Naive thymus-derived CD4-positive, alpha-beta T cell (primary cell): ENCODE measurements at regions of chr12 and their contacts with region 1.

Region 1: GRCh38 chr12:56117778-56118687 is at the start of gene ZC3H10:
- DNase-seq: peak; percentile 80 to 99 (median 96)
- ATAC-seq: peak; percentile 89
- H3K4me3 ChIP-seq: peak within 1 kb of the TSS; percentile 95
- H3K4me3 Mint-ChIP-seq: peak within 1 kb of the TSS; percentile 87 to 100 (median 96)
- H3K27ac ChIP-seq: peak within 1 kb of the TSS; percentile 93
- H3K27ac Mint-ChIP-seq: peak within 1 kb of the TSS; percentile 95 to 99 (median 98)
- H3K4me1 ChIP-seq: peaks cover 24 to 25% of the 10 kb centered on the region in 2 donors
- H3K4me1 Mint-ChIP-seq: peaks cover 24 to 47% (median 34%) of the 10 kb centered on the region in 7 donors
- H3K27me3 ChIP-seq: no peaks in the 10 kb centered on the region
- H3K27me3 Mint-ChIP-seq: no peaks in the 10 kb centered on the region
- total RNA-seq, gene ZC3H10: 7.8 to 16.3 (median 13.3) TPM

Region 2: GRCh38 chr12:55738123-55739024 is 379.7 kb before region 1 on chr12:
- CTCF ChIA-PET with region 1: interaction called, 6 read pairs
- POLR2A ChIA-PET with region 1: interaction called, 5 read pairs
- intact Hi-C with region 1: loop called (anchors 1 to 2 kb)
- DNase-seq: peak in 8 of 9 donors; percentile 69 to 88 (median 81)
- ATAC-seq: peak; percentile 79
- H3K4me3 ChIP-seq: peak overlapping the region; percentile 91
- H3K4me3 Mint-ChIP-seq: peak overlapping the region; percentile 74 to 94 (median 89)
- H3K27ac ChIP-seq: peak overlapping the region; percentile 76
- H3K27ac Mint-ChIP-seq: peak overlapping the region; percentile 86 to 96 (median 92)
- H3K4me1 ChIP-seq: peaks cover 15 to 18% of the 10 kb centered on the region in 2 donors
- H3K4me1 Mint-ChIP-seq: peaks cover 26 to 43% (median 29%) of the 10 kb centered on the region in 7 donors
- H3K27me3 ChIP-seq: no peaks in the 10 kb centered on the region
- H3K27me3 Mint-ChIP-seq: peaks cover 0 to 8% (median 0%) of the 10 kb centered on the region in 5 donors

Region 3: DNA sequence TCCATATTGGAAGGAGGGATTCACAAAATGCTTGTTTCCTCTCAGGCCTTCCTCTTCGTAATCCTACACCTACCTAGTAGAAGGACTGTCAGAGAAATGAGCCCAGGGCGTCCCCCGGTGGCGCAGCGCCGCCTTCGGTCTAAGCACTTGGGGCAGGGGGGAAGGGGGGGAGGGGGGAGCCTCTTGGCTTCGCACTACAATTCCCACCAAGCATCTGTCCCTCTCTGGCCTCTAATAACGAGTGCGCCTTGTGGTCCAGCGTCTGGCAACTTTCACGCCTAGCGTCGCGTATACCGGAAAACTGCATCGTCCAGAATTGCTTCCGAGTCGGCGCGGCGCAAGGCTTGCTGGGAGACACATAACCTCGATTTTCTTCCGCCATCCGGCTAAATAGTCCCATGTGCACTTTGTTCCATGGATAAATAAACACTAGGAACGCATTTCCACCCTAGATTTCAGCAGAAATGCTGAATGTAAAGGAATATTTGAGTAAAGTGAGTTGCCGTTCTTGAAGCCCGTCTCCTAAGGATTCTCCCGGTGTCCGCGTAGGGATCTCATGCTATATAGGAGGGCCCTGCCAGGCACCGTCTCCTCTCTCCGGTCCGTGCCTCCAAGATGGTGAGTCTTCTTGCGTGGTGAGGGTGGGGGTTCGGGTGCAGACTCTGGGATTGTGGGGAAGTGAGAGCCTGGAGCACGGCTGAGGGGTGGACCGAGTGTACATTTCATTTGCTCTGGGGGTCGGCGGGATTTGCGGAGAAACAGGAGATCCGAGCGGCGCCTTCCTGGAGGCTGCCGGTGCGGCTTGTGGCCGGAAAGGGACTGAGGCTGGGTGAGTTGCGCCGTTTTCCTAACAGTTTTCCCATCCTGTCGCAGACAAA is 76.2 kb before region 1 on chr12 and contains the start of gene RPS26:
- CTCF ChIA-PET with region 1: interaction called, 14 read pairs
- POLR2A ChIA-PET with region 1: interaction called, 62 read pairs
- intact Hi-C with region 1: loop called (anchors 1 kb)
- DNase-seq: peak; percentile 75 to 97 (median 94)
- ATAC-seq: peak; percentile 94
- H3K4me3 ChIP-seq: peak within 1 kb of the TSS; percentile 100
- H3K4me3 Mint-ChIP-seq: peak within 1 kb of the TSS; percentile 91 to 100 (median 98)
- H3K27ac ChIP-seq: peak within 1 kb of the TSS; percentile 84
- H3K27ac Mint-ChIP-seq: peak within 1 kb of the TSS; percentile 94 to 99 (median 97)
- H3K4me1 ChIP-seq: peaks cover 16 to 19% of the 10 kb centered on the region in 2 donors
- H3K4me1 Mint-ChIP-seq: peaks cover 14 to 56% (median 34%) of the 10 kb centered on the region in 7 donors
- H3K27me3 ChIP-seq: no peaks in the 10 kb centered on the region
- H3K27me3 Mint-ChIP-seq: no peaks in the 10 kb centered on the region
- total RNA-seq, gene RPS26: 40.8 to 64.5 (median 46.4) TPM

Region 4: GRCh38 chr12:56158029-56158925 is 40.2 kb after region 1 on chr12 and contains the start of gene MYL6:
- CTCF ChIA-PET with region 1: interaction called, 15 read pairs
- POLR2A ChIA-PET with region 1: interaction called, 161 read pairs
- intact Hi-C with region 1: loop called (anchors 1 to 2 kb)
- DNase-seq: peak; percentile 58 to 97 (median 89)
- ATAC-seq: peak; percentile 91
- H3K4me3 ChIP-seq: peak within 1 kb of the TSS; percentile 89
- H3K4me3 Mint-ChIP-seq: peak within 1 kb of the TSS; percentile 94 to 99 (median 96)
- H3K27ac ChIP-seq: peak within 1 kb of the TSS; percentile 98
- H3K27ac Mint-ChIP-seq: peak within 1 kb of the TSS; percentile 88 to 99 (median 97)
- H3K4me1 ChIP-seq: peaks cover 24 to 26% of the 10 kb centered on the region in 2 donors
- H3K4me1 Mint-ChIP-seq: peaks cover 31 to 59% (median 54%) of the 10 kb centered on the region in 7 donors
- H3K27me3 ChIP-seq: no peaks in the 10 kb centered on the region
- H3K27me3 Mint-ChIP-seq: no peaks in the 10 kb centered on the region
- total RNA-seq, gene MYL6: 428 to 1,509 (median 467) TPM

Region 5: DNA sequence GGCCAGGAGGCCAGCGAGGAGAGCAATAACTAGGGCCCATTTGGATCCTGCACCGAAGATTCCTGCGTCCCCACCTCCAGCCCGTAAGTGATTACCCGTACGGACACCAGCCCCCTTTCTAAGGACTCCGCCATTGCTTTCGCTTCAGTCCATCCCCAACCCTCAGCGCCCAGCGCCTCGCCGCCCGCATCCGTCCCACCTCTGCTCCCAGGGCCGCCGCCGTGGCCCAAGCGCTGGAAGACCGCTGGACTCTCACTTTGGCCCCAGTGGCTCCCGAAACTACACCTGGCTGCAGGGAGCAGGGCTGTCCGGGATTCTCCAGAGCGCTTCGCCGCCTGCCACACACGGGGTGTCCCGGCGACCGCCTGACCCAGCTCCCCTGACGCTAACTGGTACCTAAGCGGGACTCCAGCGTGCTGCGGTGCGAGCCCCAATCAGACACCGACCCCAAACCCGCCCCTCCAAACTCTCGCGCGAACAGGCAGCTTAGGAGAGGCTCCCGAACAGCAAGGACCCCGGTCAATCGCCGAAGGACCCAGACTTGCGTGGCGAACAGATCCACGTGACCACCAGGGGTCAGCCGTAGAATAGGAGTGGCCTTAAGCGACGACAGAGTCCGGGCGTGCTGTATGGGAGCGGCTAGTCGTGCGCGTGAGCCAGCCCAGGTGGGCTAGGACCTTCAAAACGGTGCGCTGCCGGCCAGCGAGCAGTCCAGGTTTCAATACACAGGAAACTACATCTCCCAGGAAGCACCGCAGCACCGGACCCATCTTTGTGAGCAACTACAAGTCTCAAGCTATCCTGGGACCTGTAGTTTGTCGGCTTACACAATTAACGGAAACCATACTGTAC is 197.8 kb after region 1 on chr12 and contains the start of gene CNPY2:
- CTCF ChIA-PET with region 1: interaction called, 3 read pairs
- POLR2A ChIA-PET with region 1: interaction called, 6 read pairs
- intact Hi-C with region 1: loop called (anchors 1 kb)
- DNase-seq: peak; percentile 83 to 94 (median 92)
- ATAC-seq: peak; percentile 93
- H3K4me3 ChIP-seq: peak within 1 kb of the TSS; percentile 100
- H3K4me3 Mint-ChIP-seq: peak within 1 kb of the TSS; percentile 96 to 99 (median 98)
- H3K27ac ChIP-seq: peak within 1 kb of the TSS; percentile 97
- H3K27ac Mint-ChIP-seq: peak within 1 kb of the TSS; percentile 93 to 99 (median 99)
- H3K4me1 ChIP-seq: peaks cover 13 to 16% of the 10 kb centered on the region in 2 donors
- H3K4me1 Mint-ChIP-seq: peaks cover 5 to 23% (median 13%) of the 10 kb centered on the region in 7 donors
- H3K27me3 ChIP-seq: no peaks in the 10 kb centered on the region
- H3K27me3 Mint-ChIP-seq: no peaks in the 10 kb centered on the region
- total RNA-seq, gene CNPY2: 48.4 to 134 (median 87.6) TPM

Region 6: DNA sequence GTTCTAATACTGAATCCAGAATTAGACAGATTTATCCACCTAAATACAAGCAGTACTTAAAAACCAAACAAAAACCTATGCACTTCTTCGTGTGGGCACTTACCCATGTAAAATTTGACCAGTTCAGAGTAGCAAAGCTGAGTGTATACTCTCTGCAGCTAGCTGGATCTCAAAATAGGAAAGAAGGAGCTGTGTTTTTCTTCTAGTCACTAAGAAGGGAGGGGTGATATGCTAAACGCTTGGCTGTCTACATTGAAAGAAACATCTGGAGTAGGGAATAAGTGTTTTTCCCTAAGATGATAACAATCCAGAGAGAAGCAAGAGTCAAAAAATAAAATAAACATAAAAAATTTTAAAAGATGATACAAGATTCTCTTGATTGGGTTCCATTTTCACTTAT is 423.6 kb after region 1 on chr12:
- CTCF ChIA-PET with region 1: no interaction called
- POLR2A ChIA-PET with region 1: no interaction called
- intact Hi-C with region 1: no loop called
- DNase-seq: no peak
- ATAC-seq: no peak
- H3K4me3 ChIP-seq: no peak overlapping the region
- H3K4me3 Mint-ChIP-seq: no peak overlapping the region
- H3K27ac ChIP-seq: no peak overlapping the region
- H3K27ac Mint-ChIP-seq: peak overlapping the region in 1 of 9 donors; percentile 19
- H3K4me1 ChIP-seq: no peaks in the 10 kb centered on the region
- H3K4me1 Mint-ChIP-seq: peaks cover 0 to 5% (median 0%) of the 10 kb centered on the region in 7 donors
- H3K27me3 ChIP-seq: no peaks in the 10 kb centered on the region
- H3K27me3 Mint-ChIP-seq: peaks cover 0 to 2% (median 0%) of the 10 kb centered on the region in 5 donors

Region 7: DNA sequence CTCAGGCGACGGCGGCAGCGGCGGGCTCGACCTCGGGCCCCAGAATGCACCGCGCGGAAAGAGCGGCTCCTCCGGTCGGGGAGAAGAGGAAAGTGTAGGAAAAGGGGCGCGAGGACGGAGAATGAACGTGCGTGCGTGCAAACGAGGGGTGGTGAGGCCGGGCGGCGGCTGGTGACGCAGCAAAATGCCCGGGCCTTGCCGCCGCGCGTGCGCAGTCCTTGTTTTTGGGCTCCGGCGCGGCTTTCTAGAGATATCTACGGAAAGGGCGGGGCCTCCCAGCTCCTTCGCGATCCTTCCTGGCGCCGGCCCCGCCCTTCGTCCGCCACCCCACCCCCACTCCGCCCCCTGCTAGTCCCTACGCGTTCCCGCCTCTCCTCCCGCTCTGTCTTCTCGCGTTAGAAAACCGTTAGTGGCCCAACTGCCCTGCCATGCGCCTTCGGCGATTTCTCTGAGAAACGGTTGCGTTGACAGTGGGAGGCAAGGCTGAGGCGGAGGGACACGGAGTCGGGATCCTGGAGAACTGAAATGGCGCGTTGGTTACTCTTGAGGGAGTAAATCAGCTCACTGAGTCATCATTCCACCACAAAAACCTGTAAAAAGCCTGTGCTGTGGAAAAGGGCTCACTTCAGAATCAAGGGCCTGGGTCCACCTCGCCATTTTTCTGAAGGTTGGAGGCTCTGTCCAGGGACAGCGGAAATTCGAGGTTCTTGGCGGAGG is 570.3 kb after region 1 on chr12 and contains the start of gene PTGES3:
- CTCF ChIA-PET with region 1: no interaction called
- POLR2A ChIA-PET with region 1: no interaction called
- intact Hi-C with region 1: loop called in 1 of 2 experiments (anchors 5 kb)
- DNase-seq: peak; percentile 95 to 98 (median 98)
- ATAC-seq: peak; percentile 87
- H3K4me3 ChIP-seq: peak within 1 kb of the TSS; percentile 80
- H3K4me3 Mint-ChIP-seq: peak within 1 kb of the TSS; percentile 97 to 100 (median 100)
- H3K27ac ChIP-seq: peak within 1 kb of the TSS; percentile 98
- H3K27ac Mint-ChIP-seq: peak within 1 kb of the TSS; percentile 95 to 100 (median 99)
- H3K4me1 ChIP-seq: peaks cover 12 to 19% of the 10 kb centered on the region in 2 donors
- H3K4me1 Mint-ChIP-seq: peaks cover 20 to 41% (median 34%) of the 10 kb centered on the region in 7 donors
- H3K27me3 ChIP-seq: no peaks in the 10 kb centered on the region
- H3K27me3 Mint-ChIP-seq: no peaks in the 10 kb centered on the region
- total RNA-seq, gene PTGES3: 111 to 229 (median 153) TPM

Region 8: GRCh38 chr12:56836800-56837663 is 719.0 kb after region 1 on chr12:
- CTCF ChIA-PET with region 1: no interaction called
- POLR2A ChIA-PET with region 1: no interaction called
- intact Hi-C with region 1: no loop called
- DNase-seq: peak in 8 of 9 donors; percentile 12 to 44 (median 25)
- ATAC-seq: peak; percentile 77
- H3K4me3 ChIP-seq: peak overlapping the region; percentile 27
- H3K4me3 Mint-ChIP-seq: peak overlapping the region; percentile 42 to 82 (median 76)
- H3K27ac ChIP-seq: no peak overlapping the region
- H3K27ac Mint-ChIP-seq: peak overlapping the region; percentile 8 to 79 (median 50)
- H3K4me1 ChIP-seq: peaks cover 6 to 10% of the 10 kb centered on the region in 2 donors
- H3K4me1 Mint-ChIP-seq: peaks cover 10 to 21% (median 17%) of the 10 kb centered on the region in 7 donors
- H3K27me3 ChIP-seq: no peaks in the 10 kb centered on the region
- H3K27me3 Mint-ChIP-seq: peaks cover 0 to 15% (median 0%) of the 10 kb centered on the region in 5 donors

Region 9: GRCh38 chr12:57224973-57225679 is 1107.1 kb after region 1 on chr12:
- CTCF ChIA-PET with region 1: no interaction called
- POLR2A ChIA-PET with region 1: no interaction called
- intact Hi-C with region 1: no loop called
- DNase-seq: peak in 8 of 9 donors; percentile 63 to 82 (median 74)
- ATAC-seq: peak; percentile 72
- H3K4me3 ChIP-seq: no peak overlapping the region
- H3K4me3 Mint-ChIP-seq: peak overlapping the region; percentile 28 to 73 (median 68)
- H3K27ac ChIP-seq: no peak overlapping the region
- H3K27ac Mint-ChIP-seq: peak overlapping the region in 3 of 9 donors; percentile 33 to 67 (median 59)
- H3K4me1 ChIP-seq: peaks cover 10 to 39% of the 10 kb centered on the region in 2 donors
- H3K4me1 Mint-ChIP-seq: peaks cover 41 to 72% (median 55%) of the 10 kb centered on the region in 7 donors
- H3K27me3 ChIP-seq: peaks cover 17 to 54% of the 10 kb centered on the region in 2 donors
- H3K27me3 Mint-ChIP-seq: peaks cover 51 to 72% (median 66%) of the 10 kb centered on the region in 5 donors

Region 10: DNA sequence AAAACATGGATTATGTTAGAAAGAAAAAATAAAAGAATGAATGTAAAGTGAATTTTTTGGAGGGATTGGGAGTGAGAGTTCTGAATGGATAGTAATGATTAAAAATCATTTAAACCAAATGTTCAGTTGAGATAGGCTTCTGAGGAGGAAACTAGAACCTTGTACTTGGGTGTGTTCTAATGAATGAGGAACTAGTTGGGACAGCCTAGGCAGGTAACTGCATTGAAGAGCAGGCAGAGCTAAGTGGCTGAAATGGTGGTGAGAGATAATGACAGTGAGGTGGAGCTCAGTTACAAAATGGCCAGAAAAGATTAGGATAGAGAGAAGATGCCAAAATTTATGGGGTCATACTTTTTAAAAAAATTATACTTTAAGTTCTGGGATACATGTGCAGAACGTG is 1956.2 kb after region 1 on chr12:
- CTCF ChIA-PET with region 1: no interaction called
- POLR2A ChIA-PET with region 1: no interaction called
- intact Hi-C with region 1: no loop called
- DNase-seq: no peak
- ATAC-seq: no peak
- H3K4me3 ChIP-seq: no peak overlapping the region
- H3K4me3 Mint-ChIP-seq: no peak overlapping the region
- H3K27ac ChIP-seq: no peak overlapping the region
- H3K27ac Mint-ChIP-seq: no peak overlapping the region
- H3K4me1 ChIP-seq: no peaks in the 10 kb centered on the region
- H3K4me1 Mint-ChIP-seq: no peaks in the 10 kb centered on the region
- H3K27me3 ChIP-seq: no peaks in the 10 kb centered on the region
- H3K27me3 Mint-ChIP-seq: peaks cover 0 to 12% (median 5%) of the 10 kb centered on the region in 5 donors